PC-9 (cell line): ENCODE measurements at regions of chr18 and their contacts with region 1.

Region 1: DNA sequence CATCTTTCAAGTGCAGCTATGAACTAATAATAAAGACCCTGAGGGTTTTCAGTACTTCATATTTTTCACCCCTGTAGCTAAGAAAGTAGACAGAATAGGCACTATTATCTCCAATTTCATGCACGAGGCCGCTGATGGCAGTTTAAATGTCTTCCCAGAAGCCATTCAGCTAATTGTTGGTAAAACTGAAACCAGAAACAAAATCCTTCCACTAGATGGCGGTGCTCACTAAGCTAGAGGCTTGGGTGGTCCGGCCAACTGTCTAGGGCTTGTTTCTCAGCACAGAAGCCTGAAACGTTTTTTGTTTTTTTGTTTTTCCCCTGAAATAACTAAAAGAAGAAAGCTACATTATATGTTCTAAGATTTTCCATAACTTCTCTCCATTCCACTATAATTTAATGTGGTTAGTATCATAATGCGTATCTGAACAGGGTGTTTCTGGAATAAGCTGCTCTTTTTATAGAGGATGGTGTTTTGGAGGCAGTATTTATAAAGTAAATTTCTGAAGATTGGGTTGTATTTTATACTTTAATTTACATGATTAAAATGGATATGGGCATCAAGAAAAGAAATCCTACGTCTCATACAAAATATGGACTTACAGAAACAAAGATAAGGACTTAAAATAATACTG is 159.4 kb downstream of the PIK3C3 start:
- DNase-seq: peak in 1 of 2 experiments; percentile 22
- H3K4me3 ChIP-seq: no peak overlapping the region
- H3K27ac ChIP-seq: no peak overlapping the region
- H3K4me1 ChIP-seq: no peaks in the 10 kb centered on the region; the same call in 1 of the 2 replicates
- H3K27me3 ChIP-seq: no peaks in the 10 kb centered on the region
- CTCF ChIP-seq: peak; percentile 82

Region 2: DNA sequence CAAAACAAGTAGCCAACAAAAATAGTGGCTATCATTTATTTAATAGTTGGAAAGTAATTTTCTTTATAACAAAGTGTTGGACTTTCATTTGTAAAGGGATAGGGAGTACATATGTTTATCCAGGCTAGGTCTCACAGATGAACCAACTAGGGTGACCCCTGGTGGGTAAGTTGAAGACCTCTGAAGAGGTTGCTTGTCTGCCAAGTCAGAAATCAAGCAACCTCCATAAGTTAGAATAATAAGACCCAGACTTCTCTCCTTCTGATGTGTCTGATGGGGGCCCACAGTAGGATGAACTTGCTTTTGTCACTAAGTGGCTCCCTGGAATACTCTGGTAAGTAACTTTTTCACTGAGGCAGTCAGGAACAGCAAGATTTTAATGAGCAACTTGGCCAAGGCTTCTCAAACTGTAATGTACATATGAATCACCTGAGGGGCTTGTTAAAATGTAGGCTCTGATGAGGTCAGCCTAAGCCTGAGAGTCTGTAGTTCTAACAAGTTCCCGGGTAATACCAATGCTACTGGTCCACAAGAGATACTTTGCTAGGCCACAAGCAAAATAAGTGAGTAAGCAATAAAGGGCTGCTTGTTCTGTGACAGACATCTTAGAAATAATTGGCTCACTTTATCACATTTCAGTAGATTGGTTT is 160.2 kb after region 1 on chr18:
- CTCF ChIA-PET with region 1: no interaction called
- POLR2A ChIA-PET with region 1: no interaction called
- intact Hi-C with region 1: loop called (anchors 1 kb)
- DNase-seq: no peak
- H3K4me3 ChIP-seq: no peak overlapping the region
- H3K27ac ChIP-seq: no peak overlapping the region
- H3K4me1 ChIP-seq: no peaks in the 10 kb centered on the region
- H3K27me3 ChIP-seq: no peaks in the 10 kb centered on the region
- CTCF ChIP-seq: no peak

Region 3: DNA sequence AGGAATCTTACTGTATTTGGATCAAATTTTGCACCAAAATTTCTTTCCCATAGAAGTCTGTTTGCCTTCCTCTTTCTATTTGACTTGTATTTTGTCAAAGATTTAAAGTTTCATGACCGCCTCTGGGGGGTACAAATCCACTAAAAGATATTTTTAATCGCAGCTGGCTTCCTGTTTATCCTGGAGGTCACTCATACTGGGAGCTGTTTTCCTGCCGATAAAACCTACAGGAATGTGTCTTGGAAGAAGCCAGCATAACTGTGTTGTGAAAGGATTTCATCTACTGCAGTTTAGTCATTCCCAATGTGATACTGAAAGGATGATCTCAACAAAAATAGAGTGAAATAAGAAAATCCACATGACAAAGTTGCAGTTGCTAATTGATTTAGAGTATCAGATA is 817.1 kb after region 1 on chr18:
- CTCF ChIA-PET with region 1: no interaction called
- POLR2A ChIA-PET with region 1: no interaction called
- intact Hi-C with region 1: no loop called
- DNase-seq: no peak
- H3K4me3 ChIP-seq: no peak overlapping the region
- H3K27ac ChIP-seq: no peak overlapping the region
- H3K4me1 ChIP-seq: no peaks in the 10 kb centered on the region
- H3K27me3 ChIP-seq: no peaks in the 10 kb centered on the region
- CTCF ChIP-seq: no peak

Region 4: DNA sequence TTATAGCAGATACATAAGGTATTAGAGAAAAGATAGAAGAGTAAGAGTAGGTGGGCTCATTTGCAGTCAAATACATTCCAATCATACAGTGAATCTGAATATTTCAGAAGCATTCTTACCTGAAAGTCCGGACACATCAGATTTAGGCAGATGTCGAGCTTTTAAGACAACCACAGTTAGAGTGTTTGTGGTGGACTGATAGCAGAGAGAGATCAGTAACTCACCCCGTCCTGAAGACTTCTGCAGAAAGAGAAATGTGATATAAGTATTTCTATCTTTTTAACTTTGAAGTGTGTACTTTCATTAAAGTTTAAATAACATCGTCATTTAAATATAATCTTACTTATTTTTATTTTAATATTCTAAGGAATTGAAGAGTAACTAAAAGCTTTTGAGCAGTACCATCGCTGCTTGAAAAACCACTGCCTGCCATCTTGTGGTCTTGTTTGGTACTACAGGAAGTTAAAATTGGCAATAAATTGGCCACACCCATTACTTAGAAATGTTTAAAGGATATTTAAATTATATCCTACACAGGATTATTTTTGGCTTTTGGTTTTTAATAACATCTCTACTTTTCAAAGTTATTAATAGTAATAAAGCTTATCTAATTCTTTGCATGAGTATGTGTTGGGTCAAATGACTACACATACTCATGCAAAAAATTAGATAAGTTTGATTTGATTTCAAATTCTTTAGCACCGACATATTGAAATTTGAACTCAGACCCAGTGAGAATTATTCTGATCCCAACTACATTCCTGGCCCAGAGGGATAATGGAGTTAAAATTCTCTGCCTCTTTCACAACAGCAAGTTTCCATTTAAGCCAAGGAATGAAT is 1157.4 kb after region 1 on chr18:
- CTCF ChIA-PET with region 1: no interaction called
- POLR2A ChIA-PET with region 1: no interaction called
- intact Hi-C with region 1: loop called (anchors 2 kb)
- DNase-seq: peak in 1 of 2 experiments; percentile 6
- H3K4me3 ChIP-seq: no peak overlapping the region
- H3K27ac ChIP-seq: no peak overlapping the region
- H3K4me1 ChIP-seq: no peaks in the 10 kb centered on the region
- H3K27me3 ChIP-seq: no peaks in the 10 kb centered on the region
- CTCF ChIP-seq: peak; percentile 78

Region 5: DNA sequence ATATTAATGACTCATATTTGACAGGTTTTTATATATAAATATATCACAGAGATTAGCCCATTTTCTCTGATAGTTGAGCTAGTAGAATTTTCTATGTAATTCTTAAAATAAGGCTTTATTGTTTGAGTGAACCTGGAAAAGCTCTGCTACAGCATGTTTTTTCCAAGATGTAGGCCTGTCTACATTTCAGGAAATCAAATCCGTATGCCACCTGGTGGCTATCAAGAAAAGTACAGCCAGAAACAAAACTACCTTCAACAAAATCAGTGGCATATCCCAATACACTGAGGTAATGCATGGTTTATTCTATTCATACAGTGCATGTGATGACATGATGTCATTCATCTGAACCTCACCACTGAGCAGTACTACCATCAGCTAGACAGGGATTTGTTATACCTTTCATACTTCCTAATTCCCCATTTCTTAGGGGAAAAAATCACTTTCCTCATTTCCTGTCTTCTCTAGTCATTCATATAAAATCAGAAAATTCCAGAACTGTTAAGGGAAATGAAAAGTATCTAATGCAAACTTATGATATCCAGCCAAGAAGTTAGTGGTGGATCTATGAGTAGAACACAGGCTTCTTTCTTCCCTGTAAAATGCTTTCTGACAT is 1473.2 kb after region 1 on chr18:
- CTCF ChIA-PET with region 1: interaction called, 3 read pairs
- POLR2A ChIA-PET with region 1: no interaction called
- intact Hi-C with region 1: loop called (anchors 5 kb)
- DNase-seq: no peak
- H3K4me3 ChIP-seq: no peak overlapping the region
- H3K27ac ChIP-seq: no peak overlapping the region
- H3K4me1 ChIP-seq: no peaks in the 10 kb centered on the region
- H3K27me3 ChIP-seq: no peaks in the 10 kb centered on the region
- CTCF ChIP-seq: peak; percentile 72